GM13976 (cell line): ENCODE measurements at regions of chr14 and their contacts with region 1.

Region 1: GRCh38 chr14:24036169-24036962 is 15.4 kb upstream of the CARMIL3 start:
- DNase-seq: peak; percentile 73
- CTCF ChIP-seq: peak; percentile 76

Region 2: DNA sequence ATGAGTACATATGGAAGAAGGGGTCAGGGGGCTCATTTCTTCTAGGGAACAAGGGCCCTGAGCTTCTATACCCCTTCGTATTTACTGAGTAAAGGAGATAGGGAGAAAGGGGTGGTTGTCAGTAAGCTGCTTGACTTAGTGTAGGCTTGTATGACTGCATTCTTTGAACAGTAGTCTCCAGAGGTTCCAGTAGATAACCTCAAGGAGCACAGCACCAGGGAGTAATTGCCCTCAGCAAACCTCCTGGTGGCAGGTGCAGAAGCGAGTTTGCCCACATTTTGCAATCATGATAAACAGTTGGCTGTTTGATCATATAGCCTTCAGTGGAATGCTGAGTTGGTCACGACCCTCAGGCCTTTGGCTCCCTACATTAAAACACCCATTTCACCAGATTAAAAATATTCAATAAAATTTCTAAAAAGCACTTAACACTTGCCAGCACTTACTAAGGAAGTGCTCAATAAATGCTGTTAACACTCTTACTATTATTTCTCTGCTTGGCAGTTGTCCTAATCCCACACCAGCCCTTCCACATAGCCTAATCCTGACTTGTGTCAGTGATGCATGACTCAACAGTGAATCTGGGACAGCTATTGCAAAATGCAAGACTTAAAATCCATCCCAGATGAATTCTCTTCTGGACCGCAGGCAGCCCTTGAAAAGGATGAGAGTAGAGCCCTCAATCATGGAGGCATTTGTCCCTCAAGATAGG is 51.3 kb before region 1 on chr14:
- in situ Hi-C with region 1: loop called (anchors 10 kb)
- DNase-seq: no peak
- CTCF ChIP-seq: no peak

Region 3: DNA sequence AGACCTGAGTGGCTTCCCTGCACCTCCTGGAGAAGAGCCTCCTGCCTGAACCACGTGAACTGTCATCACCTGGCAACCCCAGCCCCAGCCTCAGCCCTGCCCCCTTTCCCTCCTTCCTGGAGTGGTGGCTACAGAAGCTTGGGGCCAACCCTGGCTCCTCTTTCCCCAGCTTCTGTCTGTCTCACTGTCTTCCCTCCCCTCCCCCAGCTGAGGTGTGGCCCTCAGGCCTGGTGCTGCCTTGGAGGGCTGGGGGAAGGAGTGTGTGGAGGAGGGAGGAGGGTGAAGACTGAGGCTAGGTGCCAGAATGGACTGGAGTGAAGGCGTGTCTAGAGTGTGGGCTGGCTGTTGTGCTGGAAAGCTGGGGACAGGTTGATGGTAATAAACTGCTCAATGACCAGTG is 341.3 kb after region 1 on chr14:
- in situ Hi-C with region 1: no loop called
- DNase-seq: no peak
- CTCF ChIP-seq: no peak